ENCODE measurements at regions of chr3 and their contacts with region 1.

Region 1: GRCh38 chr3:59607656-59608055 is 557.8 kb upstream of the CFAP20DC start:
- DNase-seq: peak in 2 of 3 donors; percentile 13 to 26
- H3K4me3 ChIP-seq: no peak overlapping the region
- H3K27ac ChIP-seq: no peak overlapping the region
- H3K4me1 ChIP-seq: no peaks in the 10 kb centered on the region
- H3K27me3 ChIP-seq: no peaks in the 10 kb centered on the region

Region 2: DNA sequence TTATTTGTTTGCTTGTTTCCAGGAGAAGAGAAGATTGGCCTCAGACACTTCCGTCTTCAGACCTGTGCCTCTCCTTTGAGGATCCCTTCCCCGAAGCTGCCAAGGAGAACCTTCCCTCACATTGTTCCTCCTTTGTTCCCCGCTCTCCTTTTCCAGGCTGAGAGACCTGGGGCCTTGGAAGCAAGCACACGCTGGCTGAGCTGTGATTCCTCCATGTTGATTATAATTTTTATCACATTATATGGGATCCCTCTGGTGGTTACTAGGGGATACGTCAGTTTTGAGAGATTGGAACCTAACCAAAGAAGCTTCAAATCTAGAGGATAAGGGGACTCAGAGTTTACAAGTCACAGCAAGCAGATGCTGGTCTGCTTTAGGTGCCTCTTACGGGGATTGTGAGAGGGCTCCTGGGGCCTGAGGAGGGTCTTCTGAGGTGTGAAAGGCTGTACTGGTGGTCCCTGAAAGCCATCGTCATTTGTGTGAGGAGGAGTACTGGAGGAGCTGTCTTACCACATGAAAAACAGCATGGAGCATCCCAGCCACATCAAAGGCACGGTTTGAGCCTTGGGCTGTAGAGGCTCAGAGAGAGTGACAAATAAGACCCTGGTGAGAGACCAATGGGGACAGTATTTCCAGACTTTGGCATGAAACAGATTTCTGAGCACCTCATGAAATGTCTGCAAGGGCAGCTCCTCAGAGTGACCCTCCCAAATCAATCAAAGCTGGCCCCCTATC is 202.2 kb after region 1 on chr3:
- CTCF ChIA-PET with region 1: interaction called, 14 read pairs
- POLR2A ChIA-PET with region 1: no interaction called
- DNase-seq: peak; percentile 30 to 52 (median 51)
- H3K4me3 ChIP-seq: no peak overlapping the region
- H3K27ac ChIP-seq: no peak overlapping the region
- H3K4me1 ChIP-seq: no peaks in the 10 kb centered on the region
- H3K27me3 ChIP-seq: no peaks in the 10 kb centered on the region